ENCODE measurements at regions of chr7 and their contacts with region 1.

Region 1: GRCh38 chr7:104923010-104923421 is 91.0 kb upstream of the KMT2E start:
- DNase-seq: peak; percentile 72
- ATAC-seq: peak; percentile 90

Region 2: DNA sequence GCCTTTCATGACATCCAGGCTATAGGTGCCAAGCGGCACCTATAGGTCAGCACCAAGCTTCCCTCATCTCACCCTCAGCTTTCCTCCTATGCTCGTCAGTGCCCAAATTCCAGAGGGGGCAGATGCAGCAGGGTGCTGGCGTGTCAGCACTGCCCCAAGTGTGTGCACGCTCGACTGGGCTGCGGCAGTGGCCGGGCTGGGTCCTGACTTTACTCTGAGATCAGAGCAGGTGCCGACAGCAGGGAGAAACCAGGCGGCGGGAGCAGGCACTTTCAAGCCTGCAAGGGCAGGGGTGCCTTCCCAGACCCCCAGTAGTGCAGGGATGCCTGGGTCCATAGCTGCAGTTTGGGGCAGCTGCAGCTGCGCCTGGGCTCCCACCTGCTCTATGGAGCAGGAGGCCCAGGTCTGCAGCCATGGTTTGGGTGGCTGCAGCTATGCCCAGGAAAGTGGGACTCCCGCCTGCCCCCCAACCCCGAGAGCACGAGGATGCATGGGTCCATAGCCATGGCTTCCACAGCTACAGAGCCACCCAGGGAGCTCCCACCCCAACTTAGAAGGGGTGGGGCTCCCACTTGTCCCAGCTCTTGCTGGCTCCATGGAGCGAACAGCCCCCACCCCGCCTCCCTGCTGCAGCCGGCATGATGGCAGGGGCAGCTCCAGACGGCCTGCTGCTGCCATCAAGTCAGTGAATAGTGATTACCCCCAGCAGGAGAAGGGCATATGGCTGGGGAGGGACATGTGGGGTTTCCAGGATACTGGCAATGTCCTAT is 108.2 kb before region 1 on chr7:
- intact Hi-C with region 1: no loop called
- DNase-seq: no peak
- ATAC-seq: no peak

Region 3: GRCh38 chr7:104883718-104884452 is 39.1 kb before region 1 on chr7:
- intact Hi-C with region 1: loop called (anchors 2 kb)
- DNase-seq: peak; percentile 93
- ATAC-seq: peak; percentile 99

Measured in Right ventricle myocardium superior (tissue), 1 donor.